PC-9 (cell line): ENCODE measurements at regions of chr20 and their contacts with region 1.

Region 1: GRCh38 chr20:35699127-35699975 is at the starts of genes NFS1 and ROMO1:
- DNase-seq: peak; percentile 69 to 82
- H3K4me3 ChIP-seq: peak within 1 kb of the TSS; percentile 96
- H3K27ac ChIP-seq: peak within 1 kb of the TSS; percentile 75
- H3K4me1 ChIP-seq: peaks cover 25% of the 10 kb centered on the region
- H3K27me3 ChIP-seq: no peaks in the 10 kb centered on the region
- CTCF ChIP-seq: no peak; the same call in 1 of the 2 replicates
- total RNA-seq, gene NFS1: 56.9 and 65.0 TPM in 2 replicates
- total RNA-seq, gene ROMO1: 175 and 271 TPM in 2 replicates

Region 2: GRCh38 chr20:35463455-35464300 is 235.7 kb before region 1 on chr20:
- CTCF ChIA-PET with region 1: no interaction called
- POLR2A ChIA-PET with region 1: interaction called, 3 read pairs
- intact Hi-C with region 1: loop called (anchors 5 kb)
- DNase-seq: peak; percentile 56 to 60
- H3K4me3 ChIP-seq: no peak overlapping the region
- H3K27ac ChIP-seq: no peak overlapping the region
- H3K4me1 ChIP-seq: peaks cover 26% of the 10 kb centered on the region
- H3K27me3 ChIP-seq: no peaks in the 10 kb centered on the region
- CTCF ChIP-seq: peak; percentile 83

Region 3: GRCh38 chr20:35680452-35681183 is 18.7 kb before region 1 on chr20:
- CTCF ChIA-PET with region 1: no interaction called
- POLR2A ChIA-PET with region 1: no interaction called
- intact Hi-C with region 1: no loop called
- DNase-seq: no peak
- H3K4me3 ChIP-seq: no peak overlapping the region
- H3K27ac ChIP-seq: no peak overlapping the region
- H3K4me1 ChIP-seq: no peaks in the 10 kb centered on the region
- H3K27me3 ChIP-seq: no peaks in the 10 kb centered on the region
- CTCF ChIP-seq: no peak

Region 4: GRCh38 chr20:36064658-36065426 is 365.5 kb after region 1 on chr20:
- CTCF ChIA-PET with region 1: no interaction called
- POLR2A ChIA-PET with region 1: no interaction called
- intact Hi-C with region 1: no loop called
- DNase-seq: peak; percentile 74 to 99
- H3K4me3 ChIP-seq: peak overlapping the region; percentile 68
- H3K27ac ChIP-seq: no peak overlapping the region
- H3K4me1 ChIP-seq: peaks cover 20% of the 10 kb centered on the region
- H3K27me3 ChIP-seq: no peaks in the 10 kb centered on the region
- CTCF ChIP-seq: no peak